Head of caudate nucleus (tissue), 42 donors: ENCODE measurements at regions of chr1 and their contacts with region 1.

Region 1: DNA sequence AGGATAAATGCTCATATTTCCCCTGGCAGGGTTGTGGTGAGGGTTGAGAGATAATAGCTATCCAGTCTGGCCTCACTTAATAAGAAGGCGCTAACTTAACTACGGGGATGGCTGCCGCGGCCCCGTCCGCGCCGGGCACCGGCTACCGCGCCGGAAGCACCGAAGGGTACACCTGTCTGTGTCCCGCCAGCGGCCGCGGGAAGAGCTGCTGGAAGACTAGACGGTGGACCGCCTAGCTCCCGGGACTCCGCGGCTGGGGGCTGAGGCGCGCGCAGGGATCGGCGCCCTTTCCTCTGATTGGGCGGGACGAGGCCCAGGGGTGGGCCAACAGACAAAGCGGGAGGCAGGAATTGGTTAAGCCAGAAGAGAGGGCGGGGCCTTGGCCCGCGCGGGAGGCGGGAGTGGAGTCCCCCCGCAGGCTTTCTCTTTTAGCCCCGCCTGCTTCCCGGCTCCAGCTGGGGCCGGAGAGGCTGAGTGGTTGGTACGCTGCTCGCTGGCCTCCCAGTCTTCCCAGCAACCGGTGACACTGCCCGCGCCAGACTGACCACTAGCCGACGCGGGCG is at the start of gene ZNF672:
- DNase-seq: peak; percentile 93 to 99 (median 98)

Region 2: GRCh38 chr1:248174521-248174920 is 663.4 kb before region 1 on chr1 and contains the start of gene OR2M2:
- intact Hi-C with region 1: no loop called
- DNase-seq: no peak

Region 3: GRCh38 chr1:248873993-248874533 is 36.2 kb after region 1 on chr1:
- intact Hi-C with region 1: loop called (anchors 2 kb)
- DNase-seq: peak in 40 of 42 donors; percentile 56 to 92 (median 78)